Uterus (tissue), 4 donors: ENCODE measurements at regions of chr14 and their contacts with region 1.

Region 1: DNA sequence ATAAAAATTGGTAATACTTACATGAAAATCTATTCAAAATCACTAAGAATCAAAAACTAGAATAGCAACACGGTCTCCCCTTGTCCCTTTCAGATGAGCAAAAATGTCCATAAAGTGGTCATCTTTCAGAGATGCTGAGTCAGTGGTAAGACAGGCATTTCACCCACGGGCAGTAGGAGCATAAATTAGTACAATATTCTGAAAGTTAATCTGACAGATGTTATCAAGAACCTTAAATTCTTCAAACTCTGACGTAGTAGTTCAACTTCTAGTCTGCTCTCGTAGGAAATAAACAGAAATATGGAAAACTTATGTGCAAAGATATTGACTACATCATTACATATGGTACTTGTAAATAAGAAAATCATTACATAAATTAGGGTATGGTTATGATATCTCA is 33.1 kb upstream of the GNPNAT1 start:
- DNase-seq: no peak
- H3K4me3 ChIP-seq: no peak overlapping the region
- H3K27ac ChIP-seq: no peak overlapping the region
- H3K4me1 ChIP-seq: no peaks in the 10 kb centered on the region
- H3K27me3 ChIP-seq: no peaks in the 10 kb centered on the region
- CTCF ChIP-seq: no peak
- POLR2A ChIP-seq: no peak

Region 2: GRCh38 chr14:52640137-52640536 is 184.4 kb before region 1 on chr14:
- intact Hi-C with region 1: no loop called
- DNase-seq: no peak
- H3K4me3 ChIP-seq: no peak overlapping the region
- H3K27ac ChIP-seq: no peak overlapping the region
- H3K4me1 ChIP-seq: no peaks in the 10 kb centered on the region
- H3K27me3 ChIP-seq: no peaks in the 10 kb centered on the region
- CTCF ChIP-seq: no peak
- POLR2A ChIP-seq: no peak

Region 3: GRCh38 chr14:52961060-52961639 is 136.6 kb after region 1 on chr14:
- intact Hi-C with region 1: loop called (anchors 5 kb)
- DNase-seq: peak; percentile 55 to 67
- H3K4me3 ChIP-seq: no peak overlapping the region
- H3K27ac ChIP-seq: peak overlapping the region; percentile 13 to 60
- H3K4me1 ChIP-seq: no peaks in the 10 kb centered on the region
- H3K27me3 ChIP-seq: no peaks in the 10 kb centered on the region
- CTCF ChIP-seq: peak; percentile 45 to 85 (median 76)
- POLR2A ChIP-seq: no peak

Region 4: GRCh38 chr14:53055003-53055402 is 230.5 kb after region 1 on chr14:
- intact Hi-C with region 1: loop called (anchors 10 kb)
- DNase-seq: no peak
- H3K4me3 ChIP-seq: no peak overlapping the region
- H3K27ac ChIP-seq: no peak overlapping the region
- H3K4me1 ChIP-seq: no peaks in the 10 kb centered on the region
- H3K27me3 ChIP-seq: no peaks in the 10 kb centered on the region
- CTCF ChIP-seq: peak; percentile 63 to 74 (median 68)
- POLR2A ChIP-seq: no peak